Left ventricle myocardium superior (tissue), 1 donor: ENCODE measurements at regions of chr12 and their contacts with region 1.

Region 1: DNA sequence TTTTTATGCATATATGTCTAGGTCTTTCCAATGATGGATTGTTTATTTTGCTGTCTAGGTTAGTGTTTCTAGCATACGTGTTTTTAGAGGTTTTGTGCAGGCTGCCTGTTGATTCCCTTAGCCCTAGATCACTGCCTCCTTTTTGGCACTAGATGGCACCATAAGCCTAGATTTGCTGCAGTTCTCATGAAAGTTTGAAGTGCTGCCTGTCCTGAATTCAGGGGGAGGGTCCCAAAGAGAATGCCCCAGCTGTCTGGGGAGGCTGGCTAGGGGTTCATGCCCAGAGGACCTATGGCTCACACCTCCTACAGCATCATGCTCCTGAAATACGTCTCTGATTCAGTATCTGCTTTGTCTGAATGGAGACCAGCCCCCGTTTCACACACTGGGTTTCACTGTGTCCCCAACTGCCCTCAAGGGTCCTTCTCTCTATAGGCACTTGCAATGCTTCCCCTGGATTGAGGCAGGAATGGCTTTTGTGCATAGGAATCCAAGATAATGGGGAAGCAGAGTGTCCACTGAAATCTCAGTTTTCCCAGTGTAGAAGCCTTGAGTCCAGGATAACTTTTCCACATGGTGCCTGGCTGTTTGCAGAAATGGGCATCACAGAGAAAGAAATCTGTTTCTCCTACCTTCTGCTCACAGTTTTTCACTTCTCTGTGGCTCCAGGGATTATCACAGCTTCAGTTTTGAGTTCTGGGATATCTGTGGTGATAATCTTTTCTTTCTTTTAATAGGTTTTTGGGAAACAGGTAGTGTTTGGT is 14.2 kb upstream of the TXNRD1 start:
- DNase-seq: no peak
- ATAC-seq: peak; percentile 79

Region 2: GRCh38 chr12:104358347-104359003 is 157.1 kb after region 1 on chr12:
- intact Hi-C with region 1: loop called (anchors 2 kb)
- DNase-seq: peak; percentile 55
- ATAC-seq: peak; percentile 76

Region 3: GRCh38 chr12:104427011-104427461 is 225.6 kb after region 1 on chr12:
- intact Hi-C with region 1: no loop called
- DNase-seq: no peak
- ATAC-seq: no peak

Region 4: DNA sequence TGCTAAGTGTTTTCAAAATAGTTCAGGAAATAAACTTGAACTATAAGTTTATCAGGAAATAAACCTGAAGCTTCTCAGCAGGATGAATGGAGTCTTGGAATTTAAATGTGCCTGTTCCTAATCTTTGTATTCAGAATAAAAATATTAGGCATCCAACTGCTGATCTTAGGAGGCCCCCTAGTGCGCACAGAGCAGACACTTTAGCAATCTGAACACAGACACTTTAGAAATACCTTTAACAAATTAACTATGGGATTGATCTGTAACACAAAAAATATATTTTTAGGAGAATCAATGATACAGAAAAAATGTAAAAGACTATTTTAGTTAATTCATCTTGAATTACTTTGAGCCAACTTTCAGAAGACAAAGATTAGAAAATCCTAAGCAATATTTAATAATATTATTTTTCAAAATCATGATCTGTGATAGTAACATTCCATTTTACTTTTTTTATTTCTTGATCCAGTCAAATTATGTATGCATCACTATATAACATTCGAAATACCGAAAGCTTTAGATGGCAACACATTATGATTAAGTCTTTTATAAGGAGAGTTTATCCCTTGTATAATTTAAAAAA is 675.8 kb after region 1 on chr12:
- intact Hi-C with region 1: loop called (anchors 5 kb)
- DNase-seq: peak; percentile 47
- ATAC-seq: peak; percentile 77